H1 (cell line): ENCODE measurements at regions of chr1 and their contacts with region 1.

Region 1: GRCh38 chr1:22317226-22317919 is 134.3 kb upstream of the ZBTB40 start:
- DNase-seq: peak in 1 of 2 experiments; percentile 86
- H3K4me3 ChIP-seq: no peak overlapping the region
- H3K27ac ChIP-seq: no peak overlapping the region
- H3K4me1 ChIP-seq: peaks cover 7 to 35% (median 23%) of the 10 kb centered on the region in 4 experiments
- H3K27me3 ChIP-seq: peaks cover 0 to 4% (median 0%) of the 10 kb centered on the region in 4 experiments; a peak in 2 of 7 replicates
- CTCF ChIP-seq: peak; percentile 72 to 91 (median 88)
- EP300 ChIP-seq: no peak
- POLR2A ChIP-seq: no peak
- RAD21 ChIP-seq: peak; percentile 70 to 79

Region 2: DNA sequence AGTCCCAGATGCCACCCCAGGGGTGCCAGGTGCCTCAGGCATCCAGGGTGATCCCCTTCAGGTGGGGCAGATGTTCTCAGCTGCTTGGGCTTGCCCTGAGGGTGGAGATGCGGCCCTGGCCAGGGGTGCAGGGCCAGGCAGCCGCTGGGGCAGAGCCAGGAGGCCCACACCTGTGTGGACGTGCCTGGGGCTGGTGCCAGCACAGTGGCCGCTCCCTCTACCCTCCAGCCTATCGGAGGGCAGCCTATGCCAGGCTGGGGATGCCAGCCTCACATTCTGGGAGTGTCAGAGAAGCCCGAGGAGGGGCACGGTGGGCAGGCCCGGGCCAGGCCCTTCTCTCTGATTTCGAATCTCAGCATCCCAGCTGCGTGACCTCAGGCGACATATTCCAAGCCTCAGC is 78.0 kb before region 1 on chr1:
- CTCF ChIA-PET with region 1: interaction called, 12 read pairs
- POLR2A ChIA-PET with region 1: no interaction called
- DNase-seq: no peak
- H3K4me3 ChIP-seq: no peak overlapping the region
- H3K27ac ChIP-seq: no peak overlapping the region; the same call in 1 of the 2 replicates
- H3K4me1 ChIP-seq: peaks cover 4 to 11% (median 5%) of the 10 kb centered on the region in 4 experiments
- H3K27me3 ChIP-seq: no peaks in the 10 kb centered on the region; a peak in 1 of 7 replicates
- CTCF ChIP-seq: no peak
- EP300 ChIP-seq: no peak
- POLR2A ChIP-seq: no peak
- RAD21 ChIP-seq: no peak

Region 3: DNA sequence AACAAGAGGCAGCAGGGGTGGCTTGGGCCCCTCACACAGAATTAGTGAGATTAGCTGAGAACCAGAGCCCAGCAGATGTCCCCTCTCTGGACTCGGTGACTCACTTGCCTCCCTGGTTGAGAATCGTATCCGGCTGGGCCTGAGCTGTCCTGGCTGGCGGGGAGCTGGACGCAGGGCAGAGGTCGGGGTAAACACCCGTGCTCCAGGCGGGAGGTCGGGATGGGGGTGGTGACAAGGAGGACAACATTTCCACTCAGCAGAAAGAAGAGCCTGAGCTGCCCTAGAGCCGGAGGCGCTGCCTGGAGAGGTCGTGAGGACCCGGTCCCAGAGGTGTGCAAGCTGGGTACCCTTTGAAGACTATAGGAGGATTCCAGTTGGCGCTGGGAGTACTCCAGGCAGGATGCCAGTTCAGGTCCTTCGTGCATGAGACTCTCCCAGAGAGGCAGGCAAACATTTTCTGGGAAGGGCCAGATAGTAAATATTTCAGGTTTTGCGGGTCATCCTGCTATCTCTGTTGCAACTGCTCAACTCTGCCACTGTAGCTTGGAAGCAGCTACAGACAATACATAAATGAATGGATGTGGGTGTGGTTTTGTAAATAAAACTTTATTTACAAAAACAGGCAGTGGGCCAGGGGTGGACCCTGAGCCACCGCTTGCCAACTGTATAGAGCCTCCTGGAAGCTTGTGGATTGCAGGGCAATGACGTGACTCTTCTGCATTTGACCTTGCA is 57.7 kb before region 1 on chr1:
- CTCF ChIA-PET with region 1: no interaction called
- POLR2A ChIA-PET with region 1: no interaction called
- DNase-seq: no peak
- H3K4me3 ChIP-seq: no peak overlapping the region
- H3K27ac ChIP-seq: no peak overlapping the region
- H3K4me1 ChIP-seq: peaks cover 10 to 27% (median 17%) of the 10 kb centered on the region in 4 experiments
- H3K27me3 ChIP-seq: no peaks in the 10 kb centered on the region
- CTCF ChIP-seq: no peak
- EP300 ChIP-seq: no peak
- POLR2A ChIP-seq: no peak
- RAD21 ChIP-seq: no peak

Region 4: DNA sequence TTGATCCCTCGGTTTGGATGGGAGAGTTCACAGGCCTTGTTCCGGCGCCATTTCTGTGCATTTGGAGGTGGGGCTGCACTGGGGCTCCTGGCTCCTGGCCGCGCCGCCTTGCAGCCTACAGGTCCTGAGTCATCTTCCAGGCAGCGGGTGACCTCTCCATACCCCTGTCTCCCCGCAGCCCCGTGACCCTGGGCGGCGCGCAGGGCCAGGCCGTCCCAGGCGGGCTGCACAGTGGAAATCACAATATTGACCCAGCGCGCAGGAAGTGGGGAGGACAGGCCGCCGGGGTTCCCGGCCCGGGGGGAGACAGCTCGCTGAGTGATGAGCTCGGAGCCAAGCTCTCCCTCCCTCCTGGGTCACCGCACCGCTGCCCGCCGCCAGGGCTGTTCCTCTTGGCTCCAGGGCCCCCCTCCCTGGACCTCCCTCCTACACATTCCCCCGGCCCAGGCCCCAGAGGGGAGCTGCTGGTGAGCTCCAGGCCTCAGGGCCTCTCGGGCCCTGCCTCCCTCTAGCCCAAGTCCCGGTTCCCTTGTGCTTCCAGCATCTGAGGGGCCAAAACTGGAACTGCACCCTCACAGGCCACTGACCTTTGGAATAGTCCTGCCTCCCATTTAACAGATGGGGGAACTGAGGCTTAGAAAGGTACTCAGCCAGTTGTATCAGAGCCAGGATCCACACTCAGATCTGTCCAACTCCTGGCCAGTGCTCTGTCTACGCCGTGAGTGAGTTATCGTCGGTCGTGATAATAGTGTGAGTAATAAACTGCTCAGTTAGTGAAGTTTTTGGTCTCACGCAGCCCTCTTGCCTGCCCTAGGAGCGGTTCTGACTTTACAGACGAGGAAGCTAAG is 31.6 kb before region 1 on chr1:
- CTCF ChIA-PET with region 1: interaction called, 12 read pairs
- POLR2A ChIA-PET with region 1: no interaction called
- DNase-seq: no peak
- H3K4me3 ChIP-seq: no peak overlapping the region
- H3K27ac ChIP-seq: no peak overlapping the region
- H3K4me1 ChIP-seq: peaks cover 0 to 5% (median 2%) of the 10 kb centered on the region in 4 experiments; a peak in 2 of 7 replicates
- H3K27me3 ChIP-seq: no peaks in the 10 kb centered on the region; a peak in 1 of 7 replicates
- CTCF ChIP-seq: no peak
- EP300 ChIP-seq: no peak
- POLR2A ChIP-seq: no peak
- RAD21 ChIP-seq: no peak

Region 5: GRCh38 chr1:22328331-22329152 is 11.2 kb after region 1 on chr1:
- CTCF ChIA-PET with region 1: interaction called, 19 read pairs
- POLR2A ChIA-PET with region 1: no interaction called
- DNase-seq: peak in 1 of 2 experiments; percentile 39
- H3K4me3 ChIP-seq: no peak overlapping the region
- H3K27ac ChIP-seq: no peak overlapping the region; the same call in 1 of the 2 replicates
- H3K4me1 ChIP-seq: peaks cover 0 to 3% (median 2%) of the 10 kb centered on the region in 4 experiments; a peak in 2 of 7 replicates
- H3K27me3 ChIP-seq: no peaks in the 10 kb centered on the region
- CTCF ChIP-seq: no peak
- EP300 ChIP-seq: no peak
- POLR2A ChIP-seq: no peak
- RAD21 ChIP-seq: no peak

Region 6: GRCh38 chr1:22350171-22350909 is 33.0 kb after region 1 on chr1:
- CTCF ChIA-PET with region 1: interaction called, 14 read pairs
- POLR2A ChIA-PET with region 1: no interaction called
- DNase-seq: peak in 1 of 2 experiments; percentile 72
- H3K4me3 ChIP-seq: peak overlapping the region in 2 of 4 experiments; percentile 11 to 52; a peak in 4 of 8 replicates
- H3K27ac ChIP-seq: no peak overlapping the region
- H3K4me1 ChIP-seq: peaks cover 9 to 18% (median 12%) of the 10 kb centered on the region in 4 experiments; a peak in 6 of 7 replicates
- H3K27me3 ChIP-seq: peaks cover 0 to 3% (median 0%) of the 10 kb centered on the region in 4 experiments; a peak in 2 of 7 replicates
- CTCF ChIP-seq: no peak
- EP300 ChIP-seq: no peak
- POLR2A ChIP-seq: no peak
- RAD21 ChIP-seq: no peak

Region 7: GRCh38 chr1:22437573-22437972 is 120.2 kb after region 1 on chr1:
- CTCF ChIA-PET with region 1: no interaction called
- POLR2A ChIA-PET with region 1: no interaction called
- DNase-seq: no peak
- H3K4me3 ChIP-seq: no peak overlapping the region
- H3K27ac ChIP-seq: no peak overlapping the region
- H3K4me1 ChIP-seq: peaks cover 1 to 6% (median 4%) of the 10 kb centered on the region in 4 experiments; a peak in 3 of 7 replicates
- H3K27me3 ChIP-seq: no peaks in the 10 kb centered on the region
- CTCF ChIP-seq: no peak
- EP300 ChIP-seq: no peak
- POLR2A ChIP-seq: no peak
- RAD21 ChIP-seq: no peak